ENCODE measurements at regions of chr12 and their contacts with region 1.

Region 1: DNA sequence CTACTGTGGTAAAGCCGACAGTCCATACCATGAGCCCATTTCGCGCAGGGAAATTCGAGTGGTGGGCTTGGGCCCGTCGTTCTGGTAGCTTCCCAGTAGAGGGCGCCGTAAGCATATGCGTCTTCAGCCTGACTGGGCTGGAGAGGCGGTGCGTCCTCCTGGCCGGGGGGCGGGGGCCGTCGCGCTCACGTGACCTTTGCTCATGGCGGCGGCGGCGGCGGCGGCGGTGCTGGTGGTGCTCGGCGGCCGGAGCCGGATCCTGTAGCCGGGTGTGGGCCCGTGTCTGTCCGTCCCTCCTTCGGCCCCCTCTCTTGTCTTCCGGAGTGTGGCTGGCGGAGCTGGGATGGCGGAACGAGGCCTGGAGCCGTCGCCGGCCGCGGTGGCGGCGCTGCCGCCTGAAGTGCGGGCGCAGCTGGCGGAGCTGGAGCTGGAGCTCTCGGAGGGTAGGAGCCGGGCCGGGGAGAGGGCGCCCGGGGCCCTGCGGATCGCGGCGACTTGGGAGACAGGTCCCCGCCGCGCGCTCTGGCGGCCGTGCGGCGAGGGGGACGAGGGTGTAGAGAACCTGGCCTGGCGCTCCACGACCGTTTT is at the start of gene DIP2B:
- DNase-seq: peak; percentile 16
- H3K4me3 ChIP-seq: peak within 1 kb of the TSS; percentile 70
- H3K27me3 ChIP-seq: no peaks in the 10 kb centered on the region
- CTCF ChIP-seq: peak; percentile 90
- polyA plus RNA-seq, gene DIP2B: 13.2 and 15.8 TPM in 2 replicates

Region 2: GRCh38 chr12:50517456-50518048 is 12.7 kb after region 1 on chr12:
- CTCF ChIA-PET with region 1: interaction called, 11 read pairs
- POLR2A ChIA-PET with region 1: no interaction called
- DNase-seq: no peak
- H3K4me3 ChIP-seq: no peak overlapping the region
- H3K27me3 ChIP-seq: no peaks in the 10 kb centered on the region
- CTCF ChIP-seq: no peak

Region 3: GRCh38 chr12:50620109-50620977 is 115.5 kb after region 1 on chr12:
- CTCF ChIA-PET with region 1: interaction called, 12 read pairs
- POLR2A ChIA-PET with region 1: no interaction called
- DNase-seq: peak; percentile 73
- H3K4me3 ChIP-seq: no peak overlapping the region
- H3K27me3 ChIP-seq: no peaks in the 10 kb centered on the region
- CTCF ChIP-seq: peak; percentile 28; the same call in 1 of the 2 replicates

Region 4: GRCh38 chr12:50637870-50638481 is 133.1 kb after region 1 on chr12:
- CTCF ChIA-PET with region 1: interaction called, 131 read pairs
- POLR2A ChIA-PET with region 1: interaction called, 12 read pairs
- DNase-seq: no peak
- H3K4me3 ChIP-seq: no peak overlapping the region
- H3K27me3 ChIP-seq: no peaks in the 10 kb centered on the region
- CTCF ChIP-seq: peak; percentile 54